Activated B cell treated with CpG ODN at 0.5 μM for 24 hours (primary cell): ENCODE measurements at regions of chr7 and their contacts with region 1.

Region 1: DNA sequence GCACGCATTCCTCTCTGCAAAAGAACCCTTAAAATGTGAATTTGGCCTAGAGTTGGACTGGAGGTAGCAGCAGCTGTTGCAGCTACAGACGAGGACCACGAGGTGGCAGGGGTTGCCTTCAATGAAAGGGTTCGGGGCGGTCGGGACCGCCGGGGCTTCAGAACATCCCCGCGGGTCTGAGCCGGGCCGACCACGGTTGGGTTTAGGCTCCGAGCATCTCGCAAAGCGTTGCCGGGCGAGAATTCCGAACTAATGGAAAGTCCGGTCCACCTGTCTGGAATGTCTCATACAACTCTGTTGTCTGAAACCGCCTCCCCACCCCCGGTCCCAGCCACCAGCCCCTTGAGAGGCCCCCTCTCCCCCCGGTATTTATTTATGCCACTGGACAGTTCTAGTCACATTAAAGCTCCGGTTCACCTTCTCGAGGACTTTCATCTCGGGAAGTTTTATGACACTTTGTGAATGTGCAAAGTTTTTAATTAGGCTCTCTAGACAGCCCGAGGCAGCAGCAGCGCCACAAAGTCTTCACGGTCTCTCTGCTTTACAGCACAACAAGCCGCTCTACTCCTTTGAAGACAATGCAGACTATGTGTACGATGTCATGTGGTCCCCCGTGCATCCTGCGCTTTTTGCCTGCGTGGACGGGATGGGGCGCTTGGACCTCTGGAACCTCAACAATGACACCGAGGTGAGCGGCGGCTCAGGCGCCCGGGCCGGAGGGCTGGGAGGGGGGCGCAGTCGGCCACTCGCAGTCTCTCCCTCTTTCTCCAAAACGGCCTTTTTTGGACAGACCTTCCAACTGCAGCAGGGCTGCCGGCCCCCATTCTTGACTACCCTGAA is 246.2 kb downstream of the SLC25A13 start:
- DNase-seq: peak; percentile 37
- ATAC-seq: peak; percentile 89
- H3K4me3 Mint-ChIP-seq: peak overlapping the region; percentile 84
- H3K27ac Mint-ChIP-seq: no peak overlapping the region
- H3K4me1 Mint-ChIP-seq: peaks cover 7% of the 10 kb centered on the region
- H3K27me3 Mint-ChIP-seq: peaks cover 27% of the 10 kb centered on the region
- CTCF ChIP-seq: peak; percentile 45

Region 2: GRCh38 chr7:96388620-96389383 is 313.1 kb after region 1 on chr7:
- CTCF ChIA-PET with region 1: no interaction called
- POLR2A ChIA-PET with region 1: no interaction called
- intact Hi-C with region 1: loop called (anchors 10 kb)
- DNase-seq: no peak
- ATAC-seq: no peak
- H3K4me3 Mint-ChIP-seq: no peak overlapping the region
- H3K27ac Mint-ChIP-seq: no peak overlapping the region
- H3K4me1 Mint-ChIP-seq: no peaks in the 10 kb centered on the region
- H3K27me3 Mint-ChIP-seq: peaks cover 1% of the 10 kb centered on the region
- CTCF ChIP-seq: no peak

Region 3: GRCh38 chr7:97027427-97028234 is 951.9 kb after region 1 on chr7:
- CTCF ChIA-PET with region 1: interaction called, 29 read pairs
- POLR2A ChIA-PET with region 1: no interaction called
- intact Hi-C with region 1: loop called (anchors 1 kb)
- DNase-seq: no peak
- ATAC-seq: peak; percentile 71
- H3K4me3 Mint-ChIP-seq: peak overlapping the region; percentile 75
- H3K27ac Mint-ChIP-seq: no peak overlapping the region
- H3K4me1 Mint-ChIP-seq: peaks cover 23% of the 10 kb centered on the region
- H3K27me3 Mint-ChIP-seq: peaks cover 73% of the 10 kb centered on the region
- CTCF ChIP-seq: no peak

Region 4: DNA sequence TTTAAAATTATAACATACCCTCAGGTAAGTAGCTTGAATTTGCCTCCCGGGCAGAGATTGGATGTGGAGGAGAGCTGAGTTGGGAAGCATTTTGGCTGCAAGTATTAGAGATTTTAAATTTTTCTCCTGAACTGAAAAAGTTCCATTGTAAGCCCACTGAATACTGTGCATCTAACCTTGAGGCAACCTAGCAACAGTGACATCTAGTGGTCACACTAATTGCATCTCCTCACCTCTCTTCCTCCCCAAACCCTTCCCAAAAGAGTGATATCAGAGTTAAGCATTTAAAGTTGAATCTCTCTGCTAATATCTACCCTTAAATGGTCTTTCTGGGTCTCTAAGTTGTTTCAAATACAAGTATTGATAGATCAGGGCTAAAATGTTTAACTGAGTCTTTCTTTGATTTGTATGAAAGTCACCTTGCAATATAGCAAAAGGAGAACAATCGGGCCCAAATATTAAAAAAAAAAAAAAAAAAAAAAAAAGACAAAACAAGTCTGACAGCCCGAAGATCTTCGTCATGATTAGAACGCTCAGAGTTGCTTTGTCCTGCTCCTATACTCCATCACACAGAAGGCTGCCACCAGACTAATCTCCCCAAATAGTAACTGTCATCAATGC is 989.3 kb after region 1 on chr7:
- CTCF ChIA-PET with region 1: interaction called, 15 read pairs
- POLR2A ChIA-PET with region 1: no interaction called
- intact Hi-C with region 1: loop called (anchors 1 kb)
- DNase-seq: no peak
- ATAC-seq: peak; percentile 71
- H3K4me3 Mint-ChIP-seq: no peak overlapping the region
- H3K27ac Mint-ChIP-seq: no peak overlapping the region
- H3K4me1 Mint-ChIP-seq: no peaks in the 10 kb centered on the region
- H3K27me3 Mint-ChIP-seq: peaks cover 7% of the 10 kb centered on the region
- CTCF ChIP-seq: no peak

Region 5: DNA sequence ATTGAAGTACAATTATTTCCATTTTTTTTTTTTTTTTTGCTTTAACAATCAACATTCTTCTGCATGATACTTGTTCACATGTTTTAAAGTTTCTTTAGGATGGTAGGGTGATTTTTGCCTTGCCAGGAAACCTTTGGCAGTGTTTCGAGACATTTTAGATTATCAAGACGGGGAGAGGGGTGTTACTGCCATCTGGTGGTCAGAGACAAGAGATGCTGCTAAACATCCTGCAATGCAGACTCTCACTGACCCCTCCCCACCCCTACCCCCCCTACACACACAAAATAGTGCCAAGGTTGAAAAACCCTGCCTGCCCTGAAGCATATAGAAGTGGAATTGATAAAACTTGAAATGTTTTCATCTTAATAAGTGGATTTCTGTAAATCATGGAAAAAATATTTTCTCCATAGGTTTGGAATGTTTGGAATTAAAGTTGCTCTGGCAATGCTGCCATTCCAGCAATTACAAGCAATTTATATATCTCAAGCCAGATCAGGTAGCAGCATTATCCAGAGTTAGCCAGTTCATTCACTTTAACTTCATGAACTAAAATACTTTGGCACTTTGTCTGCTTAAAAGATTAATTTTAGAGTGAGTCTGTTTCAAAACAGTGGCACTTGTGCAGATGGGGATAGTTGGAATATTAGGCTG is 1103.8 kb after region 1 on chr7:
- CTCF ChIA-PET with region 1: no interaction called
- POLR2A ChIA-PET with region 1: no interaction called
- intact Hi-C with region 1: loop called (anchors 10 kb)
- DNase-seq: no peak
- ATAC-seq: peak; percentile 79
- H3K4me3 Mint-ChIP-seq: no peak overlapping the region
- H3K27ac Mint-ChIP-seq: no peak overlapping the region
- H3K4me1 Mint-ChIP-seq: peaks cover 6% of the 10 kb centered on the region
- H3K27me3 Mint-ChIP-seq: no peaks in the 10 kb centered on the region
- CTCF ChIP-seq: peak; percentile 63

Region 6: DNA sequence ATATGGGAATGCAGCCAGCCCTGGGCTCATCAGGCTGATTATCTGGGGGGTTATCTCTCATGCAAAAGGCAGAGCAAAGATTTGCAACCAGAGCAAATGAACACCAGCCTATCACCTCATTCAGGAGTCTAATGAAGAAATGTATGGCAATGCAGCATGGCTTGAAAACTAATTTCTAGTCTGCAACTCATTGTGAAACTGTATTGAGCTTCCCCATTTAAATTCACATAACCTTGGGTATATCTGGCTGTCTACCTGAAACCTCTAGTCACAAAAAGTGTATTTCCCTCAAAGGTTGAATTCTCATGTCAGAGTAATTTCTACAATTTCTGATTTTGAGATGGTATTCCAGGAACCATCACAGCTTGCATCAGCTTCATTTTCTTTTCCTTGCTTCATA is 1281.7 kb after region 1 on chr7:
- CTCF ChIA-PET with region 1: no interaction called
- POLR2A ChIA-PET with region 1: no interaction called
- intact Hi-C with region 1: no loop called
- DNase-seq: no peak
- ATAC-seq: no peak
- H3K4me3 Mint-ChIP-seq: no peak overlapping the region
- H3K27ac Mint-ChIP-seq: no peak overlapping the region
- H3K4me1 Mint-ChIP-seq: no peaks in the 10 kb centered on the region
- H3K27me3 Mint-ChIP-seq: no peaks in the 10 kb centered on the region
- CTCF ChIP-seq: no peak